ENCODE measurements at regions of chr9 and their contacts with region 1.

Region 1: DNA sequence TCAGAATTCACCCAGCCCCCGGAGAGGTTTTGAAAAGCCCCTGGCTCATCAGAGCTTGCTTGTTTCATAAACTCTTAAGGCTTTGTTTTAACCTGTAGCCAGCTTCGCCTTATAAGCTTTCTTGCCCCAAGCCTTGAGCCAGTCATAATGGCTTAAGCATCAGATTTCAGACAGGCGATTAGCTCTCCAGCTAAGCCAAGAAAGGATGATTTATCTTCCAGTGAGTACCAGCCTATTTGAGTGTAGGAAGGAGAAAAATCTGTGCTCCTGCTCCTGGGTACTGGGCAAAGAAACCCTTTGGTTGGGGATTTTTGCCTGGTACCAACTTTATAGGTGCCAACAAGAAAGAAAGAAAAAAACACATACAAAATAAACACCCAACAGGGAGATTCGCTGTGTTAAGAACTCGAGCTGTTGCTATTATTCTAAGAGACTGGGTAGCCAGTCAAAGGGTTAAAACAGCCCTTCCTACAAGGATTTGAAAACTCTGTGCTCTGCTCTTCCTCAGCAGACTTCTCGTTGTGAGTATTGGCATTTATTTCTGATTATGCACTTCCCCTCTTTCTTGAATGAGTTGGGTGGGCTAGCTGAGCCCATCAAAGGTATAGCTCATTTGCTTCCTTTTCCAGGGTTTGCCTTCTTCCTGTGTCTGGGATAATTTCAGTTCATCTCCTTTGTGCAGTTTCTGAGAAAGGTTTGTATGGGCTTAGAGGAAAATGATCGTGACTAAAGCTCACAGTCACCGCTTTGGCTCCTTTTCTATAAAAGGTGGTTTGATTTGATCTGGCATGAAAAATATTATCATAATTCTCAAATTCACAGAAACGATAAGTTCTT is 157.2 kb upstream of the DMRT1 start:
- DNase-seq: peak; percentile 81
- H3K4me3 ChIP-seq: peak overlapping the region; percentile 19 to 70 (median 27)
- H3K27ac ChIP-seq: peak overlapping the region; percentile 99
- H3K4me1 ChIP-seq: peaks cover 58% of the 10 kb centered on the region
- H3K27me3 ChIP-seq: no peaks in the 10 kb centered on the region
- CTCF ChIP-seq: no peak
- POLR2A ChIP-seq: no peak

Region 2: GRCh38 chr9:642014-642413 is 42.3 kb before region 1 on chr9:
- CTCF ChIA-PET with region 1: no interaction called
- POLR2A ChIA-PET with region 1: no interaction called
- dilution Hi-C with region 1: no loop called
- intact Hi-C with region 1: no loop called
- DNase-seq: peak; percentile 60
- H3K4me3 ChIP-seq: no peak overlapping the region
- H3K27ac ChIP-seq: no peak overlapping the region
- H3K4me1 ChIP-seq: no peaks in the 10 kb centered on the region
- H3K27me3 ChIP-seq: no peaks in the 10 kb centered on the region
- CTCF ChIP-seq: no peak
- POLR2A ChIP-seq: no peak

Region 3: DNA sequence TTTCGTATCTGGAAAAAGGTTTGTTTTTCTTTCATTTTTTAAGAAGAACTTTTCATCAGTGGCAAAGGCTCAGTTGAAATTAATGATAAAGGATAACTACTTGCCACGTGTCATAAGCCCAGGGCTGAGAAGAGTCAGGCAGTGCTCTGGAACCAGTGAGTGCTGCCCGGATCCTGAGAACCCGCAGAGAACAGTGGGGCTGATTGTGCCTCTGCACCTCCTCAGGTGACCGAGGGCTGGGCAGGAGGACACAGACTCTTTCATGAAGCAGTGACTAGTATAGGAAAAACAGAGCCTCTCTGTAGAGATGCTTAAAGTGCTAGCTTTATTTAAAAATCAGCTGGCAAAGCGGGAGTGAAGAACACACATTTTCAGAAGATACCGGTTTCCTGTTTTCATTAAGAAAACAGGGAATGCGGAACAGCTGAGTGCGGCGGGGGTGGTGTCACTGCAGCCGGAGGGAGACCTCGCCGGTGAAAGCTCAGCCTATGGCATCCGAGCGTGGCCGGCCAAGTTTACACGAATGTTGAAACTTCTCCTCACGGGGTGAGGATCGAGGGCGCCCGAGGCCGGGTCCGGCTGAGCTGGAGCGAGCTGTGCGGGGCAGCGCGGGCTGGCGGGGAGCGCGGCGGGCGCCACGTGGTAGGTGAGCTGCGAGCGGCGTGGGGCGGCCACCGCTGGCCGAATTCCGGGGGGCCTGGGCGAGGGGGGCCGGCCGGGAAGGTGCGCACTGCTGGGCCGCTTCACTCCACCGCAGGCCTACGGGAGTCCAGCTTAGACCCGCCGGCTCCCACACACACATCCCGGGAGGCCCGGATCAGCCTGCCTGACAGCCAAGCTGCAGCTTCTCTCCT is 22.6 kb after region 1 on chr9:
- CTCF ChIA-PET with region 1: interaction called, 3 read pairs
- POLR2A ChIA-PET with region 1: no interaction called
- dilution Hi-C with region 1: no loop called
- intact Hi-C with region 1: loop called (anchors 1 kb)
- DNase-seq: peak; percentile 68
- H3K4me3 ChIP-seq: peak overlapping the region; percentile 2 to 81 (median 41)
- H3K27ac ChIP-seq: peak overlapping the region; percentile 86
- H3K4me1 ChIP-seq: peaks cover 25% of the 10 kb centered on the region
- H3K27me3 ChIP-seq: no peaks in the 10 kb centered on the region
- CTCF ChIP-seq: no peak
- POLR2A ChIP-seq: no peak

Region 4: GRCh38 chr9:734831-735511 is 50.7 kb after region 1 on chr9:
- CTCF ChIA-PET with region 1: interaction called, 4 read pairs
- POLR2A ChIA-PET with region 1: interaction called, 4 read pairs
- dilution Hi-C with region 1: no loop called
- intact Hi-C with region 1: loop called (anchors 1 kb)
- DNase-seq: peak; percentile 98
- H3K4me3 ChIP-seq: no peak overlapping the region
- H3K27ac ChIP-seq: peak overlapping the region; percentile 19
- H3K4me1 ChIP-seq: peaks cover 12% of the 10 kb centered on the region
- H3K27me3 ChIP-seq: no peaks in the 10 kb centered on the region
- CTCF ChIP-seq: no peak
- POLR2A ChIP-seq: no peak

Region 5: DNA sequence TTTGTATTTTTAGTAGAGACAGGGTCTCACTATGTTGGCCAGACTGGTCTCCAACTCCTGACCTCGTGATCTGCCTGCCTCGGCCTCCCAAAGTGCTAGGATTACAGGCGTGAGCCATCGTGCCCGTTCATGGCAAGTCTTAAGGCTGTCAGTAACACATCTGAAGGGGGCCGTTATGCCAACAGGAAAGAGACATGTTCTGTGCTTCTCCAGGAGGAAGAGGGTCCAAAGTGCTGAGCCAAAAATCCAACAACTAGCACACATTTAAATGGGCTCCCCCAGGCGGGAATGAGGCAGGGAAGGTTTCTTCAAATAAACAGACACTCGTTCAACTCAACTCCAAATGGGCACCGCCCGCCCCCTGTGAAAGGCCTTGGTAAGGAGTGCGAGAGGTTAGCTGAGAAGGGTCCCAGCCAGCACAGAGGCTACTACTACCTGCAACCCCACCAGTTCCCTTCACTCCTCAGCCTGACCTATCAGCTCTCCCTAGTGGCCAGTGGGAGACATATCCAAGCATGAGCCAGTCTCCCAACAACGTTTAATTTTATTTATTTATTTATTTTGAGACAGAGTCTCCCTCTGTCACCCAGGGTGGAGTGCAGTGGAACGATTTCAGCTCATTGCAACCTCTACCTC is 73.1 kb after region 1 on chr9:
- CTCF ChIA-PET with region 1: interaction called, 20 read pairs
- POLR2A ChIA-PET with region 1: interaction called, 5 read pairs
- dilution Hi-C with region 1: no loop called
- intact Hi-C with region 1: loop called (anchors 2 kb)
- DNase-seq: peak; percentile 67
- H3K4me3 ChIP-seq: no peak overlapping the region
- H3K27ac ChIP-seq: no peak overlapping the region
- H3K4me1 ChIP-seq: peaks cover 24% of the 10 kb centered on the region
- H3K27me3 ChIP-seq: no peaks in the 10 kb centered on the region
- CTCF ChIP-seq: peak; percentile 42 to 66
- POLR2A ChIP-seq: no peak